ENCODE measurements at regions of chr16 and their contacts with region 1.

Region 1: DNA sequence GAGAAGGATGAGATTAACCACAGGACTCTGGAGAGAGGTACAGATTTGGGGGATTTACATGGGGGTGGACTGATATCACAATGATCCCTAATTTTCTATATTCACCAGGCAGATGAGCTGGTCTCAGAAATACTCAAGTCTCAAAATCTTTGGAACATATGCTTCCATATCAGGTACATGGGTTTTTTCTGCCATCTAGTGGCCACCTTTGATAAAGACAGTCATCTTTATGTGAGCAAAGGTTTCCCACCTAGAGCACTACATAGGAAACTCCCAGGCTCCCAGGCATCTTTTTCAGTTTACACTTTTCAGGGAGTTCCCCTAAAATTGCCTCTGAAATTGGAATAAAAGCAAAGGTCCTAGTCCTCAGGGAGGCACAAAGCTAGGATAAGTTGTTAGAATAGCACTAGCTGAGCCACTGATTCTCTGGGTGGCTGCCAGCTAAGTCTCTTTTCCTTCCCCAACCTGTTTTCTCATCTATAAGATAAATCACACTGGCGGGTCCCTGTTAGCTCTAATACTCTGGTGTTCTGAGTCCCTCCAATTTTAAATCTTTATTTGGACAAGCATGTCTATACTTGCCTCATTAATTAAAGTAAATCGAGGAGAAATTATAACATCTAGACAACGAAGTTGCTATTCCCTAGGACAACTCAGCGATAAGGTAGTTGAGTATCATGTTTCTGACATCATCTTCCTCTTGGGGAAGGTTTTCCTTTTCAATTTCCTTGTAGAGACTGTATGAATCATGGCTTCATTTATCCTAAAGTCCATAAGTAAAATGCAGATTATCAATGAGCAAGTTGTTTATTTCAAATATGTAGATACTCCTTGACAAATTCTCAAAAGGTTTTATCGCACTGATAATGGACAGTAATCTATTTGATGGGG is 19.0 kb upstream of the MON1B start:
- DNase-seq: peak; percentile 16
- H3K4me3 ChIP-seq: no peak overlapping the region
- H3K27ac ChIP-seq: no peak overlapping the region
- H3K27me3 ChIP-seq: no peaks in the 10 kb centered on the region
- CTCF ChIP-seq: peak; percentile 76

Region 2: DNA sequence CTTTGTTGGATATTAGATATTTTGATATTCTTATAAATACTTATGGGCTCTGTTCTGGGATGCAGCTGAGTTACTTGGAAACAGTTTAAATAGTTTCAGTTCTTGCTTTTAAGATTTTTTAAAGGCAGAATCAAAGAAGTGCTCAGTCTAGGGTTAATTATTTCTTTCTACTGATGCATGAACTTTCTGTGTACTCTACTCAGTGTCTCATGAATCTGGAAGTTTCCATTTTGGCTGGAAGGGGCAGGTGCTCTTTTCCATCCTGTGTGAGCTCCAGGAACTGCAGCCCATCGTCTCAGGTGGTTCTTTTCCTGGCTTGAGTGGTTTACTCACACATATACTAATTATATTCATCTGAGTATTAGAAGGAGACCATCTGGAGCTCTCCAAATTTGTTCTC is 1384.5 kb before region 1 on chr16:
- CTCF ChIA-PET with region 1: interaction called, 20 read pairs
- POLR2A ChIA-PET with region 1: no interaction called
- DNase-seq: no peak
- H3K4me3 ChIP-seq: no peak overlapping the region
- H3K27ac ChIP-seq: no peak overlapping the region
- H3K27me3 ChIP-seq: no peaks in the 10 kb centered on the region
- CTCF ChIP-seq: no peak

Region 3: DNA sequence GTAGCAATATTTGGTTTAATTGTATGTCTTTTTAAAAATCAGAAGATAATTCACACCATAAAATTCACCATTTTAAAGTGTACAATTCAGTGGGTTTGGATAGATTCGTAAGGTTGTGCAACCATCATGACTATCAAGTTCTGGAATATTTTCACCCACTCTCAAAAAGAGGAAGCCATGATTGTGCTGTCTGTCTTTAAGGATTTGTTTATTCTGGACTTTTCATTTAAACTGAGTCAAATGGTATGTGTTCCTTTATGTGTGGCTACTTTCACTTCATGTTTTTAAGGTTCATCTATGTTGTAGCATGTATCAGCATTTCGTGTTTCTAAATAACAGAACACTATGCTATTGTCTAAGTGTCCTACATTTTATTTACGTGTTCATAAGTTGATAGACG is 1377.6 kb before region 1 on chr16:
- CTCF ChIA-PET with region 1: interaction called, 14 read pairs
- POLR2A ChIA-PET with region 1: no interaction called
- DNase-seq: no peak
- H3K4me3 ChIP-seq: no peak overlapping the region
- H3K27ac ChIP-seq: no peak overlapping the region
- H3K27me3 ChIP-seq: no peaks in the 10 kb centered on the region
- CTCF ChIP-seq: no peak

Region 4: GRCh38 chr16:75801307-75801706 is 1370.7 kb before region 1 on chr16:
- CTCF ChIA-PET with region 1: interaction called, 14 read pairs
- POLR2A ChIA-PET with region 1: no interaction called
- DNase-seq: no peak
- H3K4me3 ChIP-seq: no peak overlapping the region
- H3K27ac ChIP-seq: no peak overlapping the region
- H3K27me3 ChIP-seq: no peaks in the 10 kb centered on the region
- CTCF ChIP-seq: peak; percentile 39

Region 5: GRCh38 chr16:76653390-76654026 is 518.5 kb before region 1 on chr16:
- CTCF ChIA-PET with region 1: interaction called, 19 read pairs
- POLR2A ChIA-PET with region 1: no interaction called
- DNase-seq: peak; percentile 4
- H3K4me3 ChIP-seq: no peak overlapping the region
- H3K27ac ChIP-seq: no peak overlapping the region
- H3K27me3 ChIP-seq: no peaks in the 10 kb centered on the region
- CTCF ChIP-seq: peak; percentile 73

Region 6: DNA sequence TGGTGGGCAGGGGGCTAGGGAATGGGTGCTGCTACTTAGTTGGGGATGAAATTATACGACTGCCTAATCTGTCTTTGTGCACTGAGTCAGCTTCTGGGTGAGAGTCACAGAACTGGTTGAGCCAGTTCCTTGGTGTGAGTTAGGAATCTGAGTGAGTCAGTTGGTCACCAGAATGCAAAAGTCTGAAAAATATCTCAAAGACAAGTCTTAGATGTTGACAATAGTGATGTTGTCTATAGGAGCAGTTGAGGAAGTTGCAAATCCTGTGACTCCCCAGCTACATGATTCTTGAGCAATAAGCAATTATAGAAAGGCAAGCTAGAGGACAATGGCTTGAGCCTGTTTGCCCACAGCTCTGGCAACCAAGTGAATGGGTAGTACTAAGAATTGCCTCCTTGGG is 495.6 kb before region 1 on chr16:
- CTCF ChIA-PET with region 1: interaction called, 10 read pairs
- POLR2A ChIA-PET with region 1: no interaction called
- DNase-seq: no peak
- H3K4me3 ChIP-seq: no peak overlapping the region
- H3K27ac ChIP-seq: no peak overlapping the region
- H3K27me3 ChIP-seq: no peaks in the 10 kb centered on the region
- CTCF ChIP-seq: no peak

Region 7: DNA sequence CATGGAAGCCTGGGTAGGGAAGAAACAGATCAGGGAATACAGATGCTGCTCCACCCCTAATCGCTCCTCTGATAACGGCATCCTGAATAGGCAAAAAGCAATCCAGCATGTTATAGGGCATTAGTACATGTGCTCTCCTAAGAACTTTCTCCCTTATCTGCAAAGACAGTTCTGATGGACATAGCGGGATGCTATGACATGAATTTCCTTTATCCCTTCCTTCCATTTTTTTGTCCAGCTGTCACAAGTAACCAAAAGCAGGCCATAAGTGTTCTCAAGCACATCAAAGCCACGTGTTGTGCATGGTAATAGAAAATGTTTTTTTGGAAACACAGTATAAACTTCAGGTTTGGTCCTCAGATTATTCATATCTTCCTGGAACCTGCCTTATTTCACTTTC is 122.4 kb before region 1 on chr16:
- CTCF ChIA-PET with region 1: no interaction called
- POLR2A ChIA-PET with region 1: no interaction called
- DNase-seq: no peak
- H3K4me3 ChIP-seq: no peak overlapping the region
- H3K27ac ChIP-seq: no peak overlapping the region
- H3K27me3 ChIP-seq: no peaks in the 10 kb centered on the region
- CTCF ChIP-seq: no peak

Region 8: GRCh38 chr16:77183137-77183536 is 11.1 kb after region 1 on chr16:
- CTCF ChIA-PET with region 1: interaction called, 49 read pairs
- POLR2A ChIA-PET with region 1: no interaction called
- DNase-seq: no peak
- H3K4me3 ChIP-seq: no peak overlapping the region
- H3K27ac ChIP-seq: no peak overlapping the region
- H3K27me3 ChIP-seq: no peaks in the 10 kb centered on the region
- CTCF ChIP-seq: no peak